Left cardiac atrium (tissue), 4 donors: ENCODE measurements at regions of chr7 and their contacts with region 1.

Region 1: DNA sequence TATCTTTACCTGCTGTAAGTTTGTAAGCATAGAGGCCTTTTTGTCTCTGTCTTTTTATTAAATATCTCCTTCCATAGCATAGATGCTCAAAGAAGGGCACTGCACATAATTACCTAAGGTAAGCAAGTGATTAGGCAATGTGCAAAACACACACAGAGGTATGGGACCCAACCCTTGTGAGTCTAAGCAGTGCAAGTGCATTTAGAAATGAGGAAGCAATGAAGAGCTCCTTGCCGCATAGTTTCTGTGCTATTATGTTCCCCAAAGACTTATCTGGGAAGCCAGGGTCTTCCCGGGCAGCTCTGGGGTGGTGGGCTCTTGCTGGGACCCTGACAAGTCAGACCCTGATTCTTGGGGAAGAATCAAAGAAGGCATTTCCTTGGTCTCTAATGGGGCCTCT is 13.5 kb upstream of the MGAM2 start:
- DNase-seq: no peak
- ATAC-seq: no peak

Region 2: DNA sequence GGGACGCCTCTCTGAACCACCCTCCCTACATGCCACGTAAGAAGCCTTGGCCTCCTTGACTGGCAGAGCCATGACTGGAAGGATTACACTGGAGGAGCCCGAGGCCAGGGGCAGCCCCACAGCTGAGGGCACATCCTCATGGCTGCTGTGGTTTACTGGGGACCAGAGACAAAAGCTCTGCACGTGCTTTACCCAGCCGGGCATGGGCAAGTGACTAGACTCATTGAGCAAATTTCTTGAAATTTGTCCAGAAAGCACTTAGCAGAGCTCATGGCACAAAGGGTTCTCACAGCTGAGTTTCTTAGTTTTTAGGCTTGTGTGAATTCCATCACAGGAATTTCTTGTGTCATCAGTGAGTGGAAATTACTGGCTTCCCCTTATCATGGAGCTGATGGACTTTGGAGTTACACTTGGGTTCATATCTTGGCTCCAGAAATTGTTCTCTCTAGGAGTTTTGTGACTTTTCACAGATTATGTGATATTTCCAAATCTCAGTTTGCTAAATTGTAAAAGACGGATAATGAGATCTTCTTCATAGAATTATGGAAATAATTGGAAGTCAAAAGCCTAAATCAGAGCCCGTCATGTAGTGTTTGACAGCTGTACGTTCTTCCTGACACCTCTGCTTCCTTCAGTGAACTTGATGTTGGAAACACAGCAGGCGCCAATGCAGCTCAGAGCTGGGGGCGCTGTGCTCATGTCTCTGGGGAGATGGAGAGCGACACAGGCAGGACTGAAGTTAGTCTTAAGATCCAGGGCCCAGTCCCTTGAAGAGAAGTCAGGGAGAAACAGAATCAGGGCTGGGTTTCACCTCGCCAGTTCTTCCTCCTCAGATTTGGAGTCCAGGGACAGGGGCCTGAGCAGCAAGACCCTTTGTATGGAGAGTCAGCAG is 34.2 kb before region 1 on chr7:
- intact Hi-C with region 1: loop called in 1 of 2 experiments (anchors 5 kb)
- DNase-seq: no peak
- ATAC-seq: no peak